ENCODE measurements at regions of chr1 and their contacts with region 1.

Region 1: DNA sequence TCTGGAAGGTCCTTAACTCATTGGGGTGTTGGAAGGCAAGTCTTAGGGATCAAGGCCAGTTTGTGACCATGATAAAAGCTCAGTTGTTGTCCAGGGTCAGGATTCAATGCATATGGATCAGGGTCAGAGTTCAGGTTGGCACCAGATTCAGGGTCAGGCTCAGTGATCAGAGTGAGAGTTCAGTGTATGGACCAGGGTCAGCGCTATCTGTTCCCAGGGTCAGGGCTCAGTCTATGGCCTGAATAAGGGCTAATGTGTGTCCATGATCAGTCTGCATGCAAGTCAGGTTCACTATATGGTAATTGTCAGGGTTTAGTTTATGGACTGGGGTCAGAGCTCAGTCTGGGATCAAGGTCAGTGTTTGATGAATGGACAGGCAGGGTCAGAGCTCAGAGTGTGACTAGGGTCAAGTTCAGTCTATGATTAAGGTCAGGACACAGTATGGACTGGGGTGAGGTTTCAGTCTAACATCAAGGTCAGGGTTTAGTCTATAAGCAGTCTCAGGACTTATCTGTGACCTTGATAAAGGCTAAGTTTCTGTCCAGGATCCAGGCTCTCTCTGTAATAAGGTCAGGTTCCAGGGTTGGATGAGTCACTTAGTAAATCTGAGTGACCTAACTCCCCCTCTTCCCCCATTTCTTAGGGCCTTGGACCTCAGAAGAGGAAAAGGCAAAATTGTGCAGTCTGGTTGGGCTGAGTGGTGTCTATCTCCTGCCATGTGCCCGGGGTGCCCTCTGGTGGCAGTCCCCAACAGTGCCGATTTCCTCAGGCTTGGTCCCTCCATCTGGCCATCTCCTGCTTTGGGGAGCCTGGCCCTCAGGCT is 23.8 kb downstream of the KNCN start:
- DNase-seq: peak; percentile 72 to 95
- H3K4me3 ChIP-seq: no peak overlapping the region
- CTCF ChIP-seq: peak in 1 of 3 donors; percentile 86
- POLR2A ChIP-seq: no peak

Region 2: DNA sequence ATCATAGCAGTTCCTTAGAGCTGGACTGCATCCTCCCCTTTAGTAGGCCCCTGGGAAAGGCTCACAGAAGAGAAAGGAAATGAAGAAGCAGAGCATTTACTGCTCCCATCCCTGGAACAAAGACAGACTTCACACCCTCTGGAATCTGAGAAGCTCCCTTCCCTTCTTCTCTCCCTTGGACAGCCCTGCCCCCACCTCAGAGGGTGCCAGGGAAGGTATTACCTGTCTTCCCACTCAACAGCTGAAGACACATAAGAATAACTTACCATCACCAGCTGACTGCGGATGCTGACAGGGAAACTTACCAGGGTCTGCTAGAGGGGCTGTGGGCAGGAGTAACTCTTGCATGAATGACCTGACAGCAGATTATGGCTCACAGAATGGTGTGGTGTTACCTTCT is 147.7 kb before region 1 on chr1:
- intact Hi-C with region 1: no loop called
- DNase-seq: no peak
- H3K4me3 ChIP-seq: no peak overlapping the region
- CTCF ChIP-seq: no peak
- POLR2A ChIP-seq: no peak

Region 3: DNA sequence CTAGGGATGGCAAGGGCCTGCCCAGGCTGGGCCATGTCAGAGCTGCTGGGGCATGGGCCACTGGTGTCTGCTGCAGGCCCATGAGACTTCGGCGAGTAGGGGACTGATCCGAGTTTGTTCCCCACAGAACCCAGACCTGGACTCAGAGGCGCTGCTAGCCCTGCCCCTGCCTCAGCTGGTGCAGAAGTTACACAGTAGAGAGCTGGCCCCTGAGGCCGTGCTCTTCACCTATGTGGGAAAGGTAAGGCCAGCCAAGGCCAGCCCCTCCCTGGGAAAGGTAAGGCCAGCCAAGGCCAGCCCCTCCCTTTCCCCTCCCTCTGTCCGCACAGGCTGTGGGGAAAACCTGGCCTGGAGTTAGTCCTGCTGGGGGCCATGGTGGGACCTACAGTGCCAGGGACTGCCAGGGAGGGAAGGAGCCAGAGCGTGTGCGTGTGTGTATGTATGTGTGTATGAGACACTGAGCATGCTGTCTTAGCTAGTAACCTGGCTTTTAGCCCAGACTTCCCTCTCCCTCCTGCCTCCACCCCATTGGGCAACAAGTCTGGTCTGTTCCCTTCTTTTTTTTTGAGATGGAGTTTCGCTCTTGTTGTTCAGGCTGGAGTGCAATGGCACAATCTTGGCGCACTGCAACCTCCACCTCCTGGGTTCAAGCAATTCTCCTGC is 125.6 kb before region 1 on chr1:
- intact Hi-C with region 1: loop called (anchors 10 kb)
- DNase-seq: peak; percentile 77 to 90
- H3K4me3 ChIP-seq: no peak overlapping the region
- CTCF ChIP-seq: no peak
- POLR2A ChIP-seq: no peak

Region 4: DNA sequence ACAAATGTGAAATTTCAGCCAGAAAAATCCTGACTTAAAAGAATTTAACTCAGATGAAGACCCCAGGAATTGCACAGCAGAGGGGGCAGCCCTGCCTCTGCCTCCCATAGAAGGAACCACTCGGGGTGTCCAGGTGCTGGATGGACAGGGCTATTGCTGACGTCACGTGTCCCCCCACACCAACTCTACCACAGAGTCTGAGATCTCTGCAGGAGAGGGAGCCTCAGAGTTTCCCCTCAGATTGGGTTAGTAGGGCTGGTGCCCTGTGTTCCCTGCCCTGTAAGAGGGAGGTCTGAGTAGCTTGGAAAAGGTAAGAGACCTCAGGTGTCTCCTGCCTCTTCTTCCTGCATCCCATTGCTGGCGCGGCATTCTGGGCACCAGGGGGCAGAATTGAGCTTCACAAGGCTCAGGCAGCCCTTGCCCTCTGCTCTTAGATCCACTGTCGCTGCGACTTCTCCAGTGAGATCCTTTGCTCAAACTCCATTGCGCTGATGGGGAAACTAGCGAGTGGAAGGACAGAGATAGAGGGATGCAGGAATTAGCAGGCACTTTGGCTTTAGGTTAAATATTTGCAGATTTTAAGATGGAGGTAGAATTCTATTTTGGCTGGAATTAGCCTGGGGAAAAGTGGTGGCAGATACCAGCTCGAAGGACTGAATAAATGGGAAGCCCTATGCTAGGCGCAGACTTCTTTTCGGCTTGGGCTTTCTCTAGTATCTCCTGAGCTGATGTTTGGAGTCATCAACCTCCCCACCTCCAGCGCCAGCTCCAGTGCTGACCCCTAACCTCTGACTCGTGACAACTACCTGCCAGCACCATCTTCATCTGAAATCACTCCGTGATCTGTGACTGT is 80.8 kb before region 1 on chr1:
- intact Hi-C with region 1: loop called (anchors 2 kb)
- DNase-seq: peak; percentile 62 to 96
- H3K4me3 ChIP-seq: no peak overlapping the region
- CTCF ChIP-seq: no peak
- POLR2A ChIP-seq: no peak

Region 5: DNA sequence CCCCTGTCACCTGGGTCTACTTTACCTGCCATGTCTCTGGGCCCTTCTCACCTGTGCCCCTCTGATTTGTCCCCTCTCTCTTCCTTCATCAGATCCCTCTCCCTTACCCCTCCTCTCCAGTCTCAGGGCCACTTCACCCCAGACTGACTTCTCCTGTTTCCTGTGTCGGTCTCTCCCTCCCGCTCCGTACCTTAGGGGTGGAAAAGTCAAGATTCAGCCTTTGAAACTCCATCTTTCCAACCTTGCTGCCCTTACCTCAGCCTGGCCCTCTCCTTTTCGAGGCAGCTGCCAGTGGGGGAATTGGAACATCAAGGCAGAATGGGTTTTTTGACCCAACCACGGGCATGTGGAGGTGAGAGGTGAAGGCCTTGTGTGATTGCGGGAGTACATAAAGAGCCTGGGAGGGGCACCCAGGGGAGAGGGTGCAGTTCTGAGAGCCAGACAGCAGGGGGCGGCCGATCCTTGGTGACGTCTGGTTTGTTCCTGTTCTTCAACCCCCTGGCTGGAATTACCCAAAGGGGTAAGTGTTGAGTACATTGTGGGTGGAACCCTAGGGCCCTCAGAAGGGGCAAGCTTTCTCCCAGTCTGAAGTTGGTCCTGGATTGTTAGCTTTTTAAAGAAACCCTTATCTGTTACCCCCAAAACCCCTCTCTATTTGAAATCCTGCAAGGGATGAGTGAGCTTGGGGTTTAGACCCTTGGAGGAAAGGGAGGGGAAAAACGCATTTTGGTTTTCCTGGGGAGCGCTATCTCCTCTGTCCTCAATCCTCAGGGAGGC is 50.3 kb before region 1 on chr1:
- intact Hi-C with region 1: loop called (anchors 5 kb)
- DNase-seq: peak; percentile 68 to 94
- H3K4me3 ChIP-seq: no peak overlapping the region
- CTCF ChIP-seq: peak in 1 of 3 donors; percentile 73
- POLR2A ChIP-seq: no peak

Region 6: DNA sequence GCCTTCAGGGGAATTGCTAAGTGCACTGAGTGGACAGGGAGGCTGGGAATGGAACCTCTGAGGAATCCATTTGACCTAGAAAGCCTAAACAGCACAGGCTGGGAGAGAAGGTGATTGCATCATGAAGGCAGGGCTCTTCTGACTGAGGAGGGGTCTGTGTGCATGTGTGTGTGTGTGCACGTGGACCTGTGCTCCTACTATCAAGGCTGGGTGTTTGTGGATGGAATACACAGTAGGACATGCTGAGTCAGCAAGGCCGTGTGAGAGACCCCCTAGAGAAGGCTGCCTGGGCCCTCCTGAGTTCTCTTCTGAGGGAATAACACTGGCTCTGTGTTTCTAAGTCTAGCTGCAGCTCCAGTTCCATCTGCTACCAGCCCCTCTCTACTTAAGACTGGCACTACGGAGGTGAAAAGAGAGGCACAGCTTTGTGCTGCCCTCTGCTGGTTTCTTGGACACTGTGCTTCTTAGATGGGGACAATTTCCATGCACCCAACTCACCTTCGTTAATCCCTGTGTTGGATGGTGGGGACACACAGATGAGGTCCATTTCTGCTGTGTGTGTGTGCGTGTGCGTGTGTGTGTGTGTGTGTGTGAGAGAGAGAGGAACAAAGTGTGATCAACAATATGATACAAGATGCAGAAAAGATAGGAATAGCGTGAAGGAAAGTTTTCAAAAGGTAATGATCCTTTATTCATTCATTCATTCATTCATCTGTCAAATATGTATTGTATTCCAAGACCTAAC is 197.5 kb after region 1 on chr1:
- intact Hi-C with region 1: loop called (anchors 10 kb)
- DNase-seq: peak; percentile 73 to 88
- H3K4me3 ChIP-seq: no peak overlapping the region
- CTCF ChIP-seq: peak in 1 of 3 donors; percentile 80
- POLR2A ChIP-seq: no peak

Measured in lower leg skin (tissue), 4 donors.